CD14-positive monocyte (primary cell): ENCODE measurements at regions of chr11 and their contacts with region 1.

Region 1: GRCh38 chr11:7690648-7691047 is 15.6 kb downstream of the OVCH2 start:
- DNase-seq: no peak
- H3K4me3 ChIP-seq: no peak overlapping the region
- H3K4me3 Mint-ChIP-seq: no peak overlapping the region
- H3K27ac ChIP-seq: no peak overlapping the region
- H3K27ac Mint-ChIP-seq: no peak overlapping the region
- H3K4me1 ChIP-seq: no peaks in the 10 kb centered on the region
- H3K4me1 Mint-ChIP-seq: no peaks in the 10 kb centered on the region
- H3K27me3 ChIP-seq: peaks cover 34 to 43% of the 10 kb centered on the region in 2 donors
- H3K27me3 Mint-ChIP-seq: peaks cover 28 to 42% (median 35%) of the 10 kb centered on the region in 3 donors
- CTCF ChIP-seq: no peak

Region 2: GRCh38 chr11:6812390-6813005 is 878.1 kb before region 1 on chr11:
- intact Hi-C with region 1: loop called in 1 of 2 experiments (anchors 10 kb)
- DNase-seq: peak; percentile 13 to 37 (median 36)
- H3K4me3 ChIP-seq: no peak overlapping the region
- H3K4me3 Mint-ChIP-seq: no peak overlapping the region
- H3K27ac ChIP-seq: no peak overlapping the region
- H3K27ac Mint-ChIP-seq: no peak overlapping the region
- H3K4me1 ChIP-seq: no peaks in the 10 kb centered on the region
- H3K4me1 Mint-ChIP-seq: no peaks in the 10 kb centered on the region
- H3K27me3 ChIP-seq: no peaks in the 10 kb centered on the region
- H3K27me3 Mint-ChIP-seq: peaks cover 0 to 16% (median 3%) of the 10 kb centered on the region in 3 donors
- CTCF ChIP-seq: peak; percentile 92

Region 3: GRCh38 chr11:7098235-7098832 is 592.3 kb before region 1 on chr11:
- intact Hi-C with region 1: loop called (anchors 5 to 10 kb)
- DNase-seq: peak; percentile 12 to 40 (median 28)
- H3K4me3 ChIP-seq: no peak overlapping the region
- H3K4me3 Mint-ChIP-seq: no peak overlapping the region
- H3K27ac ChIP-seq: no peak overlapping the region
- H3K27ac Mint-ChIP-seq: no peak overlapping the region
- H3K4me1 ChIP-seq: no peaks in the 10 kb centered on the region
- H3K4me1 Mint-ChIP-seq: no peaks in the 10 kb centered on the region
- H3K27me3 ChIP-seq: peaks cover 0 to 5% of the 10 kb centered on the region in 2 donors
- H3K27me3 Mint-ChIP-seq: peaks cover 3 to 13% (median 4%) of the 10 kb centered on the region in 3 donors
- CTCF ChIP-seq: peak; percentile 62

Region 4: GRCh38 chr11:7637447-7638157 is 53.0 kb before region 1 on chr11:
- intact Hi-C with region 1: no loop called
- DNase-seq: no peak
- H3K4me3 ChIP-seq: no peak overlapping the region
- H3K4me3 Mint-ChIP-seq: no peak overlapping the region
- H3K27ac ChIP-seq: no peak overlapping the region
- H3K27ac Mint-ChIP-seq: peak overlapping the region in 1 of 7 donors; percentile 14
- H3K4me1 ChIP-seq: no peaks in the 10 kb centered on the region
- H3K4me1 Mint-ChIP-seq: peaks cover 5% of the 10 kb centered on the region
- H3K27me3 ChIP-seq: no peaks in the 10 kb centered on the region
- H3K27me3 Mint-ChIP-seq: peaks cover 0 to 5% (median 4%) of the 10 kb centered on the region in 3 donors
- CTCF ChIP-seq: no peak